Activated CD8-positive, alpha-beta memory T cell treated with anti-CD3 and anti-CD28 coated beads, Interleukin-2, amount 10 ng/mL, durations not matched to agents 7 days and 5 days (primary cell): ENCODE measurements at regions of chr9 and their contacts with region 1.

Region 1: DNA sequence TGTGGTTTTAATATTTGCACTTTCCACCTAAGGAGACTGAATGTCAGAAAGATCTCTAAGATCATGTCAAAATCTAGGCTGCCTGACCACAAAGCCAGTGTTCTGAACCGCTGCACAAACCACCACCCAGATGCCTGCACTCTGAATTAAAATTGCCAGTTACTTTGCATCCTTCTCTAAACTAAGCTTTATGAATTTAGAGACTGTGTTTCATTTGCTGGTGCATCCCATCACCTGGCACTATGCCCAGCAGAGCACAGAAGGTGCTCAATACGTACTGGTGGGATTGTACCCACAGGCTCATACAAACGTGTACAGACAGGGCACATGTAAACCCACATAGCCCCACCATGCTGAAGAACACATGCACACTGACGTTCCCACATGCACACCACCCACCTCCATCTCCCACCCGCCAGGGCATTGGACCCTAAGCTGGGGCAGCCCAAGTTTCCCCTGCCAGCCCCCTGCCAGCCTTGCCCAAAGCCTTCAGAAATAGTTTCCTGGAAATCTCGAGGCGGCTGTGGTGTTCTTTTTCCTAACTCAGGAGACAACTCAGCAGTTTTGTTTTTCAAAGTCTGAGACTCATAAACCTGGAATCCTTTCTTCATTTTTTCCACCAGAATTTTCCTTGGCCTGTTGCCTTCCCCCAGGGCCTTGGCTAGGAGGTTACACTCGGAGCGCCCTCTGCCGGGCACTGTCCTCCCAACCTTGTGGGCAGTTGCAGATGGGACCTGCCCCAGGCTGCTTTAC is 9.6 kb upstream of the TRAF1 start:
- DNase-seq: peak; percentile 93
- ATAC-seq: peak; percentile 75
- H3K4me3 Mint-ChIP-seq: peak overlapping the region; percentile 31
- H3K27ac Mint-ChIP-seq: peak overlapping the region; percentile 87
- H3K4me1 Mint-ChIP-seq: peaks cover 57% of the 10 kb centered on the region
- H3K27me3 Mint-ChIP-seq: peaks cover 2% of the 10 kb centered on the region

Region 2: GRCh38 chr9:120868676-120869359 is 67.4 kb before region 1 on chr9:
- CTCF ChIA-PET with region 1: interaction called, 42 read pairs
- DNase-seq: peak; percentile 97
- ATAC-seq: peak; percentile 92
- H3K4me3 Mint-ChIP-seq: peak overlapping the region; percentile 79
- H3K27ac Mint-ChIP-seq: peak overlapping the region; percentile 98
- H3K4me1 Mint-ChIP-seq: peaks cover 43% of the 10 kb centered on the region
- H3K27me3 Mint-ChIP-seq: no peaks in the 10 kb centered on the region

Region 3: DNA sequence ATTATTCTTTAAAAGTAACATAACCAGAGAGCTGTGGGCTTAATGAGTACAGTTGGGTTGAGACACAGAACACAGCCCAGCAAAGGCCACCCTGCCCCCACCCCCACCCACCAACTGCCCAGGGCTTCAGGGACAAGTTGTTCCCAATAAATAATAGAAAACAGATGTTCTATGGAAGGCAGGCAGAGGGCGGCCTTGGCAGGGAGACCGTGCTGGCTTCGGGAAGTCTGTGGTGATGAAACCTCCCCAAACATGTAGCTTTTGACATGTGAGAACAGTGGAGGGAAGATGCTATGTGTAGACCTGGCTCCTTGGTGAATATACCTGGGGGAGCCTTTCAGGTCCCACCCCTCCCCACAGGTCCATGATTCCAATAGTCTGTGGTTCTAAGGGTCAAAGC is 19.6 kb before region 1 on chr9:
- CTCF ChIA-PET with region 1: interaction called, 14 read pairs
- DNase-seq: no peak
- ATAC-seq: no peak
- H3K4me3 Mint-ChIP-seq: peak overlapping the region; percentile 37
- H3K27ac Mint-ChIP-seq: peak overlapping the region; percentile 79
- H3K4me1 Mint-ChIP-seq: peaks cover 84% of the 10 kb centered on the region
- H3K27me3 Mint-ChIP-seq: no peaks in the 10 kb centered on the region